Sigmoid colon (tissue), 7 donors: ENCODE measurements at regions of chr2 and their contacts with region 1.

Region 1: GRCh38 chr2:40668425-40668824 is 216.5 kb upstream of the SLC8A1 start:
- DNase-seq: peak; percentile 70
- H3K4me3 ChIP-seq: no peak overlapping the region
- H3K27ac ChIP-seq: peak overlapping the region; percentile 1 to 77 (median 67)
- H3K4me1 ChIP-seq: peaks cover 0 to 63% (median 21%) of the 10 kb centered on the region in 4 donors
- H3K27me3 ChIP-seq: no peaks in the 10 kb centered on the region
- CTCF ChIP-seq: no peak
- EP300 ChIP-seq: peak in 1 of 4 donors; percentile 59
- POLR2A ChIP-seq: no peak

Region 2: GRCh38 chr2:39778962-39779851 is 889.2 kb before region 1 on chr2 and contains the start of gene THUMPD2:
- intact Hi-C with region 1: no loop called
- DNase-seq: peak; percentile 84
- H3K4me3 ChIP-seq: peak within 1 kb of the TSS; percentile 65 to 98 (median 84)
- H3K27ac ChIP-seq: peak within 1 kb of the TSS; percentile 77 to 92 (median 85)
- H3K4me1 ChIP-seq: peaks cover 0 to 40% (median 19%) of the 10 kb centered on the region in 4 donors
- H3K27me3 ChIP-seq: no peaks in the 10 kb centered on the region
- CTCF ChIP-seq: no peak
- EP300 ChIP-seq: no peak
- POLR2A ChIP-seq: peak; percentile 48 to 54
- total RNA-seq, gene THUMPD2: 9.0 to 15.5 (median 13.3) TPM

Region 3: DNA sequence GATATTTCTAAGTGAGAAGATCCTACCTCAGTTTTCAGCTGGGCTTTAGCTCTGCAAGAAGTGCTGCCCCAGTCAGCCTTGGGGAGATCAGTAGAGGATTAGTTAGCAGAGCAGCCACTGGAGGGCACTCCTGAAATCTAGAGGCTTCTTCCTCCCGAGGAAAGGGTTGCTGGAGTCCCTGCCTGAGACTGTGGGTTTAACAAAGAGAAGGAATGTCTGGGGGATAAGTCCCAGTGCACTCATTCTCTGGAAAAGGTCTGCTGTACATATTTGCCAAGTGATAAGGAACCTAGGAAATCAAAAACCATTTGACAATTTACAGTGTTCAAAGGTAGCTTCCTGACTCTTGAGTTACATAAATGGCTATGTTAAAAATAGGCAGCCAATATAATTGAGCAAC is 423.8 kb before region 1 on chr2:
- intact Hi-C with region 1: loop called (anchors 10 kb)
- DNase-seq: peak; percentile 77
- H3K4me3 ChIP-seq: no peak overlapping the region
- H3K27ac ChIP-seq: peak overlapping the region; percentile 1 to 75 (median 67)
- H3K4me1 ChIP-seq: peaks cover 0 to 63% (median 50%) of the 10 kb centered on the region in 4 donors
- H3K27me3 ChIP-seq: no peaks in the 10 kb centered on the region
- CTCF ChIP-seq: peak in 3 of 4 experiments; percentile 23 to 48 (median 40)
- EP300 ChIP-seq: no peak
- POLR2A ChIP-seq: no peak

Region 4: GRCh38 chr2:40488101-40488601 is 180.3 kb before region 1 on chr2:
- intact Hi-C with region 1: no loop called
- DNase-seq: no peak
- H3K4me3 ChIP-seq: peak overlapping the region in 3 of 4 donors; percentile 3 to 52 (median 5)
- H3K27ac ChIP-seq: peak overlapping the region in 3 of 4 donors; percentile 67 to 78 (median 75)
- H3K4me1 ChIP-seq: peaks cover 0 to 36% (median 19%) of the 10 kb centered on the region in 4 donors
- H3K27me3 ChIP-seq: no peaks in the 10 kb centered on the region
- CTCF ChIP-seq: peak in 3 of 4 experiments; percentile 30 to 57 (median 55)
- EP300 ChIP-seq: no peak
- POLR2A ChIP-seq: no peak

Region 5: DNA sequence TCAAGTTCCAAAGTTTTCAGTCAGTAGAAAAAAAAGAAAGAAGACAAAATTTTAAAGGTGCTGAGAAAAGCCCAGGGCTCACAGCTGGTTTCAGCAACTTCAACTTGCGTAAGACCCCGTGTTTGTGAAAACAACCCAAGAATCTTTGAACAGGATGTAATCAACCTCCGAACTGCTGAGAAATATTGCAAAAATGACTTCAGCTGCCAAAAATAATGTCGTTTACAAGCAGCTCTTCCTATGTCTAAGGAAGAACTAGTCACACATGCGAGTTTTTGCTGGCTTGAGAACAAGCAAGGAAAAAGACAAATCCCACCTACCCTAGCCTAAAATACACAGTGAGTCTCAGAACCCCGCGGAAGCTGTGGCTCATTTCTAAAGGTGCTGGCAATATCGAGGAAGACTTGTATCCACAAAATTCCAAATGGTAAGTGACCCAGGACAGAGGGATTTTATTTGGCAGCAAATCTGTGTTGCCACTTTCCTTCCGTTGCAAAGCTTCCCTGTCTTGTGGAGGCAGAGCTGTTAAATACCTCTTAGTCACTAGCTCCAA is 156.7 kb before region 1 on chr2:
- intact Hi-C with region 1: loop called (anchors 10 kb)
- DNase-seq: peak; percentile 80
- H3K4me3 ChIP-seq: peak overlapping the region; percentile 36 to 54 (median 47)
- H3K27ac ChIP-seq: peak overlapping the region; percentile 75 to 87 (median 80)
- H3K4me1 ChIP-seq: peaks cover 0 to 59% (median 12%) of the 10 kb centered on the region in 4 donors
- H3K27me3 ChIP-seq: no peaks in the 10 kb centered on the region
- CTCF ChIP-seq: no peak
- EP300 ChIP-seq: peak in 1 of 4 donors; percentile 19
- POLR2A ChIP-seq: no peak

Region 6: GRCh38 chr2:40723194-40723593 is 54.8 kb after region 1 on chr2:
- intact Hi-C with region 1: loop called (anchors 2 kb)
- DNase-seq: no peak
- H3K4me3 ChIP-seq: no peak overlapping the region
- H3K27ac ChIP-seq: no peak overlapping the region
- H3K4me1 ChIP-seq: peaks cover 0 to 36% (median 10%) of the 10 kb centered on the region in 4 donors
- H3K27me3 ChIP-seq: no peaks in the 10 kb centered on the region
- CTCF ChIP-seq: no peak
- EP300 ChIP-seq: no peak
- POLR2A ChIP-seq: no peak

Region 7: GRCh38 chr2:40760071-40760666 is 91.7 kb after region 1 on chr2:
- intact Hi-C with region 1: loop called (anchors 10 kb)
- DNase-seq: peak; percentile 72
- H3K4me3 ChIP-seq: no peak overlapping the region
- H3K27ac ChIP-seq: peak overlapping the region in 2 of 4 donors; percentile 67 to 70
- H3K4me1 ChIP-seq: peaks cover 0 to 22% (median 18%) of the 10 kb centered on the region in 4 donors
- H3K27me3 ChIP-seq: no peaks in the 10 kb centered on the region
- CTCF ChIP-seq: peak; percentile 68 to 85 (median 76)
- EP300 ChIP-seq: no peak
- POLR2A ChIP-seq: no peak